ENCODE measurements at regions of chr12 and their contacts with region 1.

Region 1: DNA sequence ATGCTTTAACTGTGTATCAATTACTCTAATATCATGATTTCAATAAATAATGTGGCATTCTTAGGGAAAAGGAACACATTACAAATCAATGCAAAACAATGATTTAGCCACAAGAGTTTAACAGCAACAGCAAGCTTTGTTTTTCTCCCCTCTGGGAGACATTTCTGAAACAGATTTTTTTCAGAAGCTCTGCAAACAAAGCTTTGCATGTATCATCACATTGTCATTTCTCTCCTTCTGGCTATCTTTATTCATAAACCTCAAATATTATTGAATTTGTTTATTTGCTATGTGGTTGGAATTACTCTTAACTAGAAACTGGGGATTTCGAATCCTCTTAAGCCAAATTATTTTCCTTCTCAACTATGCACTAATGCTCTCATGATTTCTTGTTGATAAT is 278.4 kb upstream of the ATXN7L3B start:
- DNase-seq: no peak
- ATAC-seq: no peak
- H3K4me3 ChIP-seq: no peak overlapping the region
- H3K4me3 Mint-ChIP-seq: no peak overlapping the region
- H3K27ac ChIP-seq: no peak overlapping the region
- H3K27ac Mint-ChIP-seq: no peak overlapping the region
- H3K4me1 ChIP-seq: no peaks in the 10 kb centered on the region
- H3K4me1 Mint-ChIP-seq: no peaks in the 10 kb centered on the region
- H3K27me3 ChIP-seq: no peaks in the 10 kb centered on the region
- H3K27me3 Mint-ChIP-seq: no peaks in the 10 kb centered on the region
- CTCF ChIP-seq: no peak

Region 2: GRCh38 chr12:74292351-74293194 is 33.4 kb after region 1 on chr12:
- CTCF ChIA-PET with region 1: no interaction called
- POLR2A ChIA-PET with region 1: no interaction called
- intact Hi-C with region 1: loop called (anchors 2 kb)
- DNase-seq: no peak
- ATAC-seq: no peak
- H3K4me3 ChIP-seq: no peak overlapping the region
- H3K4me3 Mint-ChIP-seq: no peak overlapping the region
- H3K27ac ChIP-seq: no peak overlapping the region
- H3K27ac Mint-ChIP-seq: no peak overlapping the region
- H3K4me1 ChIP-seq: no peaks in the 10 kb centered on the region
- H3K4me1 Mint-ChIP-seq: no peaks in the 10 kb centered on the region
- H3K27me3 ChIP-seq: no peaks in the 10 kb centered on the region
- H3K27me3 Mint-ChIP-seq: no peaks in the 10 kb centered on the region
- CTCF ChIP-seq: no peak

Region 3: DNA sequence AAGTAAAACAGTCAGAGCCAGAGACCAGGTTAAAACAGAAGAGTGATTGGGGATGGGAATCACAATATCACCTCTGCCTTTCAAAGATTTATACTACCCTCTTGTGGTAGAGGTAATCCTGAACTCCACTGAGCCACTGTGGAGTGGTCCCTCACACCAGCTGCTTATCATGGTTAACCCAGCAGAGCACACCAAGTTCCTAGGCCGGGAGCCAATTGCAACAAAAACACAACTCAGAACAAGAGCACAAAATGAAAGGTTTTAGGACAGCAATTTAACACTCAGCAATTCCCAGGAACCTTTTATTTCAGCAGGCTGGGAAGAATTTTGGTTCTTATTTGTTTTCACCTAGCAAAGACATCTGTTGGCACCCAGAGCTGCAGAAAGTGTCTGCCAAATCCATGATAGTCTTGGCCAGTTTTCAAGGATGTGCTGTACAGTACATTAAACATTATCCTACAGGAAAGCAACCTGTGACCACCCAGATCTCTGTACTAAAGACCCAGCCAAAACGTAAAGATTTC is 57.9 kb after region 1 on chr12:
- CTCF ChIA-PET with region 1: no interaction called
- POLR2A ChIA-PET with region 1: no interaction called
- intact Hi-C with region 1: no loop called
- DNase-seq: no peak
- ATAC-seq: no peak
- H3K4me3 ChIP-seq: no peak overlapping the region
- H3K4me3 Mint-ChIP-seq: no peak overlapping the region
- H3K27ac ChIP-seq: no peak overlapping the region
- H3K27ac Mint-ChIP-seq: no peak overlapping the region
- H3K4me1 ChIP-seq: no peaks in the 10 kb centered on the region
- H3K4me1 Mint-ChIP-seq: no peaks in the 10 kb centered on the region
- H3K27me3 ChIP-seq: no peaks in the 10 kb centered on the region
- H3K27me3 Mint-ChIP-seq: no peaks in the 10 kb centered on the region
- CTCF ChIP-seq: no peak

Measured in B cell (primary cell).